A673 (cell line): ENCODE measurements at regions of chr11 and their contacts with region 1.

Region 1: GRCh38 chr11:78812513-78813293 is 238.0 kb upstream of the NARS2 start:
- DNase-seq: no peak
- H3K4me3 ChIP-seq: no peak overlapping the region
- H3K27ac ChIP-seq: no peak overlapping the region
- H3K4me1 ChIP-seq: peaks cover 11% of the 10 kb centered on the region
- H3K27me3 ChIP-seq: no peaks in the 10 kb centered on the region
- CTCF ChIP-seq: 0 out of 2 replicates have a peak, but pooled peaks have one; percentile 16

Region 2: DNA sequence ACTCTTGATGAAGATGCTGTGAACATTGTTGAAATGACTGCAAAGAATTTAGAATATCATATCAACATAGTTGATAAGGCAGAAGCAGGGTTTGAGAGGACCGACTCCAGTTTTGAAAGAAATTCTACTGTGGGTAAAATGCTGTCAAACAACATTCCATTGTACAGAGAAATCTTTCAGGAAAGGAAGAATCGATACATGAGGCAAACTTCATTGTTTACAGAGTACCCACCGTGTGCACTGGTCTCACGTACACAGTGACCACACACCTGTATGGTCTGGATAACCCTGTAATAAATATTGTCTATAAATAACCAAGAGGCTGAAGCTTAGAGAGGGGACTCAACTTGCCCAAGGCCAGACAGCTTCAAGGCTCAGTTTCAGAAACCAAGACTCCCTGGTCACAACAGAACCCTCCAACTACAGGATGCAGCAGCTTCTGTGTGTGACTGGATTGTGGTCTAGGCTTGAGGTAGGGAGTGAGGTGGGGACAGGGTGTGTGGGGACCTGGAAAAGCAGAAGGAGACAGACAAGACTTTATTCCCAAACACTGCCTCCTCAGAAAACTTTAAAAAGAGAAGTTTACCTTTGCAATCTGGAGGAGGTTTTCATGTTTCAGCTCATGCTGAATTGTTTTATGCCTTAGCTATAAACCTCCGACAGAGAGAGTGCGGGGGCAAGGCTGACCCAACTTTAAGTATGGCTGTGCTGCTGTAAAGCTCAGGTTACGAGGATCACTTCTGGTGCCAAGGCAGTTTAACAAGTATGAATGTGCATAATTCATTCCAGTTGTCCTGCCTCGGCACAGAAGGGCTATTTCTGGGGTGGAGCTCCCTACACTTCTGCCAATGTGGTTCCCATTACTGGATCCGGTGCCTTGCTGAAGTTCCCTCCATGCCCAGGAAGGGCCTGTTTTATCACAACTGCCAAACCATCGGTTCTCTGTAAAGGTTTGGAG is 134.5 kb after region 1 on chr11:
- CTCF ChIA-PET with region 1: interaction called, 11 read pairs
- POLR2A ChIA-PET with region 1: no interaction called
- intact Hi-C with region 1: no loop called
- DNase-seq: no peak
- H3K4me3 ChIP-seq: no peak overlapping the region
- H3K27ac ChIP-seq: no peak overlapping the region
- H3K4me1 ChIP-seq: no peaks in the 10 kb centered on the region
- H3K27me3 ChIP-seq: peaks cover 75% of the 10 kb centered on the region
- CTCF ChIP-seq: no peak